ENCODE measurements at regions of chr12 and their contacts with region 1.

Region 1: GRCh38 chr12:810671-811415 is 58.5 kb downstream of the WNK1 start:
- DNase-seq: no peak
- H3K4me3 ChIP-seq: no peak overlapping the region
- H3K27ac ChIP-seq: no peak overlapping the region
- H3K4me1 ChIP-seq: no peaks in the 10 kb centered on the region
- H3K27me3 ChIP-seq: no peaks in the 10 kb centered on the region
- CTCF ChIP-seq: no peak
- POLR2A ChIP-seq: no peak

Region 2: GRCh38 chr12:569803-570434 is 240.9 kb before region 1 on chr12:
- intact Hi-C with region 1: loop called (anchors 5 kb)
- DNase-seq: peak; percentile 77 to 89
- H3K4me3 ChIP-seq: peak overlapping the region; percentile 55 to 75 (median 71)
- H3K27ac ChIP-seq: peak overlapping the region; percentile 91 to 97
- H3K4me1 ChIP-seq: peaks cover 5 to 6% of the 10 kb centered on the region in 2 donors
- H3K27me3 ChIP-seq: no peaks in the 10 kb centered on the region
- CTCF ChIP-seq: peak; percentile 68 to 93 (median 90)
- POLR2A ChIP-seq: no peak

Region 3: GRCh38 chr12:823028-823698 is 12.3 kb after region 1 on chr12:
- intact Hi-C with region 1: no loop called
- DNase-seq: no peak
- H3K4me3 ChIP-seq: no peak overlapping the region
- H3K27ac ChIP-seq: no peak overlapping the region
- H3K4me1 ChIP-seq: no peaks in the 10 kb centered on the region
- H3K27me3 ChIP-seq: no peaks in the 10 kb centered on the region
- CTCF ChIP-seq: no peak
- POLR2A ChIP-seq: no peak

Measured in breast epithelium (tissue), 4 donors.